PC-9 (cell line): ENCODE measurements at regions of chr3 and their contacts with region 1.

Region 1: DNA sequence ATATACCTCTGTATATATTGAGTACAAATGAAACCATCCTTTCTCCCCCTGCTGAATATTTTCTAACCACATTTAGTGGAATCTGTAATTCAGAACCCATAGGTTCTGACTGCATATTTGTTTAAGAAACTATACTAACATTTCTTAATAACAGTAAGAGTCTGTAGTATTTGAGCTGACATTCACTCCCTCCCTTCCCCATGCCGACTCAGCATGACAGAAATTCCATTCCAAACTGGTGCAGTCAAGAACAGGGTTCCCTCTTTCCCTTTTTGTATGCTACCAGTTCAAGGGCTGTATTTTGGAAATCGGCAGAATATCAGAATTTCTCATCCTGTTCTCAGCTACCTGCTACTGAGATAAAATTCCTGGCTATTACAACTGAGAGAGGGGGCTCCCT is 796.6 kb upstream of the DPPA4 start:
- DNase-seq: no peak
- H3K4me3 ChIP-seq: no peak overlapping the region
- H3K27ac ChIP-seq: no peak overlapping the region
- H3K4me1 ChIP-seq: no peaks in the 10 kb centered on the region
- H3K27me3 ChIP-seq: no peaks in the 10 kb centered on the region
- CTCF ChIP-seq: no peak

Region 2: GRCh38 chr3:108914774-108915641 is 1219.0 kb before region 1 on chr3:
- CTCF ChIA-PET with region 1: no interaction called
- POLR2A ChIA-PET with region 1: no interaction called
- intact Hi-C with region 1: no loop called
- DNase-seq: peak; percentile 54 to 61
- H3K4me3 ChIP-seq: no peak overlapping the region
- H3K27ac ChIP-seq: no peak overlapping the region
- H3K4me1 ChIP-seq: peaks cover 6% of the 10 kb centered on the region; the same call in 1 of the 2 replicates
- H3K27me3 ChIP-seq: no peaks in the 10 kb centered on the region
- CTCF ChIP-seq: peak; percentile 99

Region 3: DNA sequence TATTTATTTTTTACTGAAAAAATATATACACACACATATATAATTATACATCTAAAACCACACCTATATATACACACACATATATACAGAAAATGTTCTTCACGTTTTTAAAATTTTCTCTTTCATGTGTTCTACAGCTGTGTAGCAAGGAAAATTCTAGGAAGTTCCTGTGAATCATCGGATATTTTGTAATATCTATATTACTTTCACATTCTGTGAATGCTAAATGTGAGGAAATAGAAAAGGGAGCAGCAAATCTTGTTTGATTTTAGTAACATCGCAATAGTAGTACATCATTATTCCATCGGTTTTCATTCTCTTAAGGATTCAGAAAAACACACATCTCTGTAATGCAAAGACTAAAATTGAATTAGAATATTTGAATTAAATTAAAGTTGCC is 100.9 kb after region 1 on chr3:
- CTCF ChIA-PET with region 1: no interaction called
- POLR2A ChIA-PET with region 1: interaction called, 10 read pairs
- intact Hi-C with region 1: no loop called
- DNase-seq: no peak
- H3K4me3 ChIP-seq: no peak overlapping the region
- H3K27ac ChIP-seq: no peak overlapping the region
- H3K4me1 ChIP-seq: no peaks in the 10 kb centered on the region
- H3K27me3 ChIP-seq: no peaks in the 10 kb centered on the region
- CTCF ChIP-seq: no peak